ENCODE measurements at regions of chr16 and their contacts with region 1.

Region 1: DNA sequence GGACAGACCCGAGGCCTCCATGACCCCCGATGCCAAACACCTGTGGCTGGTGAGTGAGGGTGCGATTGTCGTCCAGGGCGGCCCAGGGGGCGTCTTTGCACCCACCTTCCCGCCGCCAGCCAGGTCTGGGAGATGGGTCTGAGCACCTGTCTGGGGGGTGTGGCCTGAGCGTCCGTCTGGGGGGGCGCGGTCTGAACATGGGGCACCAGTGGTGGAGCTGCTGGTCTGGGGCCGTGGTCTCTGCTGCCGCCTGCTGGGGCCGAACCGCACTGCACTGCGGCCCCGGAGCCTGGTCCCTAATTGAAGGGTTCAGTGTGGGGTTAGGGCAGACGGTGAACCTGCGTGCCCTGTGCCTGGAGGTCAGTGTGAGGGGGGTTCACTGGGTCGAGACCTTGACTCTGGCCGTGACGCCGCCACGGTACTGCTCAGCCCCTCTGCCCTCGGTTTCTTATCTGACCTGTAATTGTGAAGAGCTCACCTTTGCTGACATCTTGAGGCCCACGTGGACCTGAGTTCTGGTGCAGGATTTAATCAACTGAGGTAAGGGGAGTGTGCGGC is 12.6 kb upstream of the TCF25 start:
- DNase-seq: peak; percentile 32
- ATAC-seq: peak; percentile 94
- H3K4me3 ChIP-seq: no peak overlapping the region
- H3K27ac ChIP-seq: no peak overlapping the region
- H3K4me1 ChIP-seq: no peaks in the 10 kb centered on the region
- H3K27me3 ChIP-seq: no peaks in the 10 kb centered on the region
- CTCF ChIP-seq: peak; percentile 98

Region 2: GRCh38 chr16:89749647-89750046 is 111.2 kb before region 1 on chr16:
- CTCF ChIA-PET with region 1: no interaction called
- POLR2A ChIA-PET with region 1: no interaction called
- in situ Hi-C with region 1: no loop called
- intact Hi-C with region 1: loop called (anchors 10 kb)
- DNase-seq: no peak
- ATAC-seq: no peak
- H3K4me3 ChIP-seq: no peak overlapping the region
- H3K27ac ChIP-seq: no peak overlapping the region
- H3K4me1 ChIP-seq: no peaks in the 10 kb centered on the region
- H3K27me3 ChIP-seq: no peaks in the 10 kb centered on the region
- CTCF ChIP-seq: no peak

Region 3: DNA sequence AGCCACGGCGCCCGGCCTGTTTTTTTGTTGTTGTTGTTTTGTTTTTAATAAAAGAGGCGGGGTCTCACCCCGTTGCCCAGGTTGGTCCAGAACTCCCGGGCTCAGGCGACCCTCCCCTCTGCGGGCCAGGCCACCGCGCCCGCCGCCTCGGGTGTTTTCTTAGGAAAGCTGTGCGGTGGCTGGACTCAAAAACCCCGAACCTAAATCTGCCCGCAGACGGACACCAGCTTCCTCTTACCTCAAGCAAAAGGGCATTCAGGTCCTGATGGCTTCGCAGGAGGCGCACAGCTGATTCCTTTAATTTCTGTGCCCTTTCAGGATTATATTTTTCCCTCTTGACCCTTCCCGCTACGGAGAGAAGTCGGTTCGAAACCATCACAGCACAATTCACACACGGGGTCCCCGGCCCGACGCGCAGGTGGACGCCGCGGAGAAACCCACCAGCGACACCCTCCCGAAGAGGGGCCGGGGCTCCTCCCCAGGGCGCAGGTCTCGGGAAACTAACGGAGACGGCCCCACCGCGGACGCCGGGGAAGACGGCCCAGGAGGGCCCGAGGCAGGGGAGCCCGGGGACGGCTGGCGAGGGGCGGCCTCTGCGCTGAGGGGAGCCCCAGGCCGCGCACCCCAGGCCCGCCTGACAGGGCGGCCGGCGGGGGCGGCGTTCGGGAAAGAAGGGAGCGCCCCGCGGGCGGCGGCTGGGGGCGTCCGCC is 45.0 kb before region 1 on chr16:
- CTCF ChIA-PET with region 1: interaction called, 5 read pairs
- POLR2A ChIA-PET with region 1: no interaction called
- in situ Hi-C with region 1: no loop called
- intact Hi-C with region 1: loop called (anchors 5 kb)
- DNase-seq: no peak
- ATAC-seq: peak; percentile 47
- H3K4me3 ChIP-seq: peak overlapping the region; percentile 69 to 70
- H3K27ac ChIP-seq: peak overlapping the region; percentile 77
- H3K4me1 ChIP-seq: peaks cover 5% of the 10 kb centered on the region; the same call in 1 of the 2 replicates
- H3K27me3 ChIP-seq: no peaks in the 10 kb centered on the region
- CTCF ChIP-seq: no peak